ENCODE measurements at regions of chr4 and their contacts with region 1.

Region 1: DNA sequence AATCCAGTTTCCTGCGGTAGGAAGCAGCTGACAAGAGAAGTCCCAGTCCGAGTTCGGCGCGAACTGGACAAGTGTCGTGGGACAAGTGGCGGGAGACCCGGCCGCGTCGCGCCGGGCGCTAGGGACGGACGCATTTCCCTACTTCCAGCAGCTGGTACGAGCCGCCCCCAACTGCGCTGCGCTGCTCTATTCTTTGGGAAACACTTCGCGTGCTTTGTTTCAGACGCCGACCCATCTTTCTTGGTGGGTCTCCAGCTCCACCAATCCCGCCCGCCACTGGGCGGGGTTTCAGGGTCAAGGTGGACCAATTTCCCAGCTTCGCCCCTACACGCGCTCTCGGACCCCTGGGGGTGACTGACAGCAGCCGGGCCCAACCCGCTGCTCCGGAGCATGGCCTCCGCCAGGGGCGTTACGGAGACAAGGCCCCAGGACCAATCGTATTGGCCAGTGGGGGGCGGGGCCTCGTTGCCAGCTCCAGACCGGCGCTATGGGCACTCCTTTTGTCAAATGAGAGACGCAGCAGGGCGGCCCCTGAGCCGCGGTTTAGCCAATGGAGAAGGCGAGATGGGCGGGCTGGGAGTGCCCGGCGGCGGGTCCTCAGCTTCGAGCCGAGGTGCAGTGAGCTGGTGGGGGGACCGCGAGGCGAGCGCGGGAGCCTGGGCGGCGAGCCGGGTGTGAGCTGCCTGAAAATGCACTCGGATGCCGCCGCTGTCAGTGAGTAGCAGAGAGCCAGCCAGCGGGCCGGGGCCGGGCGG is at the start of gene DCUN1D4:
- DNase-seq: peak; percentile 98
- H3K4me3 Mint-ChIP-seq: peak within 1 kb of the TSS; percentile 95
- H3K27ac Mint-ChIP-seq: peak within 1 kb of the TSS; percentile 92
- H3K4me1 Mint-ChIP-seq: peaks cover 19% of the 10 kb centered on the region
- H3K27me3 Mint-ChIP-seq: no peaks in the 10 kb centered on the region
- total RNA-seq, gene DCUN1D4: 28.9 TPM

Region 2: GRCh38 chr4:51918251-51918650 is 75.5 kb after region 1 on chr4:
- CTCF ChIA-PET with region 1: no interaction called
- POLR2A ChIA-PET with region 1: no interaction called
- DNase-seq: no peak
- H3K4me3 Mint-ChIP-seq: no peak overlapping the region
- H3K27ac Mint-ChIP-seq: no peak overlapping the region
- H3K4me1 Mint-ChIP-seq: no peaks in the 10 kb centered on the region
- H3K27me3 Mint-ChIP-seq: no peaks in the 10 kb centered on the region

Region 3: GRCh38 chr4:52038103-52038912 is 195.6 kb after region 1 on chr4 and contains the start of gene SGCB:
- CTCF ChIA-PET with region 1: interaction called, 5 read pairs
- POLR2A ChIA-PET with region 1: interaction called, 16 read pairs
- DNase-seq: peak; percentile 77
- H3K4me3 Mint-ChIP-seq: peak within 1 kb of the TSS; percentile 76
- H3K27ac Mint-ChIP-seq: peak within 1 kb of the TSS; percentile 51
- H3K4me1 Mint-ChIP-seq: peaks cover 30% of the 10 kb centered on the region
- H3K27me3 Mint-ChIP-seq: peaks cover 30% of the 10 kb centered on the region
- total RNA-seq, gene SGCB: 15.6 TPM

Region 4: DNA sequence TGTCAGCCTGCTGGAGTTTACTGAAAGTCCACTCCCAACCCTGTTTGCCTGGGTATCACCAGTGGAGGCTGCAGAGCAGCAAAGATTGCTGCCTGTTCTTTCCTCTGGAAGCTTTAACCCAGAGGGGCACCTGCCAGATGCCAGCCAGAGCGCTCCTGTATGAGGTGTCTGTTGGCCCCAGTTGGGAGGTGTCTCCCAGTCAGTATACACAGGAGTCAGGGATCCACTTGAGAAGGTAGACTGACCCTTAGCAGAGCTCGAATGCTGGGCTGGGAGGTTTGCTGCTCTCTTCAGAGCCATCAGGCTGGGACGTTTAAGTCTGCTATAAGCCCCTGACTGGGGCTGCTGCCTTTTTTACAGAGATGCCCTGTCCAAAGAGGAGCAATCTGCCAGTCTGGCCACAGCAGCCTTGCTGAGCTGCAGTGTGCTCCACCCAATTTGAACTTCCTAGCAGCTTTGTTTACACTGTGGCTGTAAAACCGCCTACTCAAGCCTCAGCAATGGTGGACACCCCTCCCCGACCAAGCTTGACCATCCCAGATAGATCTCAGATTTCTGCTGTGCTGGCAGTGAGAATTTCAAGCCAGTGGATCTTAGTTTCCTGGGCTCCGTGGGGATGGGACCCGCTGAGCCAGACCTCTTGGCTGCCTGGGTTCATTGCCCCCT is 248.9 kb after region 1 on chr4:
- CTCF ChIA-PET with region 1: no interaction called
- POLR2A ChIA-PET with region 1: no interaction called
- DNase-seq: no peak
- H3K4me3 Mint-ChIP-seq: no peak overlapping the region
- H3K27ac Mint-ChIP-seq: no peak overlapping the region
- H3K4me1 Mint-ChIP-seq: no peaks in the 10 kb centered on the region
- H3K27me3 Mint-ChIP-seq: peaks cover 6% of the 10 kb centered on the region